Activated CD8-positive, alpha-beta T cell treated with anti-CD3 and anti-CD28 coated beads, Interleukin-2, amount 10 ng/mL, durations not matched to agents 7 days and 5 days (primary cell): ENCODE measurements at regions of chr11 and their contacts with region 1.

Region 1: GRCh38 chr11:18105802-18106574 is at the start of gene SAAL1:
- DNase-seq: peak; percentile 93
- ATAC-seq: peak; percentile 98
- H3K4me3 Mint-ChIP-seq: peak within 1 kb of the TSS; percentile 94
- H3K27ac Mint-ChIP-seq: peak within 1 kb of the TSS; percentile 91
- H3K4me1 Mint-ChIP-seq: peaks cover 26% of the 10 kb centered on the region
- H3K27me3 Mint-ChIP-seq: peaks cover 14% of the 10 kb centered on the region
- total RNA-seq, gene SAAL1: 31.4 to 32.2 TPM

Region 2: GRCh38 chr11:17986007-17986710 is 119.8 kb before region 1 on chr11:
- CTCF ChIA-PET with region 1: interaction called, 24 read pairs
- POLR2A ChIA-PET with region 1: no interaction called
- DNase-seq: no peak
- ATAC-seq: no peak
- H3K4me3 Mint-ChIP-seq: no peak overlapping the region
- H3K27ac Mint-ChIP-seq: no peak overlapping the region
- H3K4me1 Mint-ChIP-seq: no peaks in the 10 kb centered on the region
- H3K27me3 Mint-ChIP-seq: no peaks in the 10 kb centered on the region

Region 3: GRCh38 chr11:17991783-17992433 is 114.1 kb before region 1 on chr11:
- CTCF ChIA-PET with region 1: interaction called, 24 read pairs
- POLR2A ChIA-PET with region 1: no interaction called
- DNase-seq: peak; percentile 64
- ATAC-seq: peak; percentile 72
- H3K4me3 Mint-ChIP-seq: no peak overlapping the region
- H3K27ac Mint-ChIP-seq: no peak overlapping the region
- H3K4me1 Mint-ChIP-seq: no peaks in the 10 kb centered on the region
- H3K27me3 Mint-ChIP-seq: no peaks in the 10 kb centered on the region

Region 4: DNA sequence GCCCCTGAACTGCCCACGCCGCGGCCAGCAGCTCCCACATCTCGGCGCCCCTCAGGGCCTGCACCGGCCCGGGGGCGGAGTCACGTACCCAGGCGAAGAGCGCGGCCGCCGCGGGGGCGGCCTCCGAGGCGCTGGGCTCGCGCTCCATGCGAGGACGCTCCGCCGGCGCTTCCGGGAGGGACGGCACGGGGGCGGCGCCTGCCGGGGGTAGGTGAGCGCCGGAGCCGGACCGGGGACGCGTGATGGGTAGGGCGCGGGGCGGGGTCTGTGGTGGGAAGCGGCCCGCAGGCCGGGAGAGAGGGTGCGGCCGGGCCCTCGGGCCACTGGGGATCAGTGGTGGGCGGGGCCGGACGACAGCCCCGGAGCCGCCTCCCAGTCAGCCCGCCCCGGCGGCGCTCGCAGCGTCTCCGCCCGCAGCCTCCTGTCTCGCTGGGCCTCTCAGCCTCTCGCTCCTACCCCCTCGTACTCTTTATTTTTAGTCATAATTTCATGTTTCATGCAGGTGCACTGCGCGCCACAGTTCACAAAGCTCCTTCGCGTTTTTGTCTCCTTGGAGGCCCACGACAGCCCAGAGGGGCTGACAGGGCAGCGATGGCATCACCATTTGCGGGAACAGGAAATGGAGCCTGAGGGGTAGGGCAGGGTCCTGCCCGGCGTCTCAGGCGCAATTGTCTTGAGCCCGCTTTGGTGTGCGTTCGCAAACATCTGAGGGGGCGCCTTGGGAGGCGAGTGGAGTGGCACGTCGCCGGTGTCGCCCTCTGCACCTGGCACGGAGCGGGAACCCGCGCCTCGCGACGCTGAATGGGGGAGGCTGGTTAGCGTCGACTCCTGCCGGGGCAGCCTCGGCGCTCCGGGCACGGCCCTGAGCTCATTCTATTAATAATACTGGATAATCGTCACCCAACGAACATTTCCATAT is 92.9 kb before region 1 on chr11 and contains the start of gene SERGEF:
- CTCF ChIA-PET with region 1: interaction called, 14 read pairs
- POLR2A ChIA-PET with region 1: interaction called, 4 read pairs
- DNase-seq: peak; percentile 95
- ATAC-seq: peak; percentile 94
- H3K4me3 Mint-ChIP-seq: peak within 1 kb of the TSS; percentile 90
- H3K27ac Mint-ChIP-seq: peak within 1 kb of the TSS; percentile 95
- H3K4me1 Mint-ChIP-seq: peaks cover 34% of the 10 kb centered on the region
- H3K27me3 Mint-ChIP-seq: no peaks in the 10 kb centered on the region
- total RNA-seq, gene SERGEF: 31.9 to 35.4 TPM

Region 5: GRCh38 chr11:18088966-18089365 is 17.0 kb before region 1 on chr11:
- CTCF ChIA-PET with region 1: interaction called, 14 read pairs
- POLR2A ChIA-PET with region 1: interaction called, 3 read pairs
- DNase-seq: no peak
- ATAC-seq: no peak
- H3K4me3 Mint-ChIP-seq: no peak overlapping the region
- H3K27ac Mint-ChIP-seq: no peak overlapping the region
- H3K4me1 Mint-ChIP-seq: no peaks in the 10 kb centered on the region
- H3K27me3 Mint-ChIP-seq: no peaks in the 10 kb centered on the region

Region 6: GRCh38 chr11:18294862-18295261 is 188.9 kb after region 1 on chr11:
- CTCF ChIA-PET with region 1: no interaction called
- POLR2A ChIA-PET with region 1: no interaction called
- DNase-seq: no peak
- ATAC-seq: no peak
- H3K4me3 Mint-ChIP-seq: no peak overlapping the region
- H3K27ac Mint-ChIP-seq: no peak overlapping the region
- H3K4me1 Mint-ChIP-seq: no peaks in the 10 kb centered on the region
- H3K27me3 Mint-ChIP-seq: no peaks in the 10 kb centered on the region